ENCODE measurements at regions of chr3 and their contacts with region 1.

Region 1: GRCh38 chr3:159260049-159260662 is 458.3 kb downstream of the MFSD1 start:
- DNase-seq: peak; percentile 77
- ATAC-seq: peak; percentile 76
- H3K4me3 ChIP-seq: no peak overlapping the region
- H3K27ac ChIP-seq: no peak overlapping the region
- H3K4me1 ChIP-seq: no peaks in the 10 kb centered on the region
- H3K27me3 ChIP-seq: peaks cover 11% of the 10 kb centered on the region
- CTCF ChIP-seq: peak; percentile 86
- POLR2A ChIP-seq: no peak
- RAD21 ChIP-seq: peak; percentile 73

Region 2: DNA sequence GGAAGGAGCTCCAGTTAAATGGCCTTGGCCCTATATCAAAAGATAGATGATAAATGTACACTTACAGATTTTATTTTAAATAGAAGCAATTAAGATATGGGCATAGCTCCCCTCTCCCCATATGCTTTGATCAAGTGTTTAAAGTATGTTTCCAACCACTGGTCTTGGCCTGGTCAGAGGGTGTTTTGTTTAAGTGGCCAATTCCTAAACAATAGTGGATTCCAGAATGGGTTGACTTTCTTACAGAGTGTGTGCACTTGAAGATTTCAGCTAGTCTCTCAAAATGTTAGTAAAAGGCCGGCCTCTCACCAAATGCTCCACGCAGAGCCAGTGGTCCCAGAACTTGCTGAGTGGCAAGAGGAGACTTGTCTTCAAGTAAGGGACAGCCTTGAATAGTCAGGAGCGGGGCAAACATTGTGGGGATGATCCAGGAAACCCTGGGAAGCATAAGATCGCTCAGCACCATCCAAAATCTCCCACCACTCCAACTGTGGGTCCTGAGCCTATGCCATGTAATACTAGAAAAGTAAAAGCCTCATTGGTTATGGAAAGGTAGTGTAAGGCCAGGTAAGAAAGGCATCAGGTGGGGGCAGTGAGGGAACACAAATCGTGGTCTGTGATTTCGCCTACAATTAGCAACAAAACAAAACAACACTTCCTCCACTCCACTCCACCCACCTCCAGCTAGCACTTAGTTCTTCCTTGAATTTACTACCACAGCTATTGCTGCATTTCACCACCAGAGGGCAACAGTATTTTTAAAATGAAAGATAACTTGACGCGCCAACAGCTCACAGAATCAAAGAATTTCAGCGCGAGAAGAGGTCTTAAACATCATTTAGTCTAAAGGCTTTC is 532.7 kb before region 1 on chr3:
- CTCF ChIA-PET with region 1: no interaction called
- POLR2A ChIA-PET with region 1: no interaction called
- dilution Hi-C with region 1: no loop called
- in situ Hi-C with region 1: no loop called
- intact Hi-C with region 1: loop called (anchors 5 kb)
- DNase-seq: peak; percentile 83
- ATAC-seq: peak; percentile 12; the same call in 1 of the 2 replicates
- H3K4me3 ChIP-seq: no peak overlapping the region
- H3K27ac ChIP-seq: peak overlapping the region; percentile 84
- H3K4me1 ChIP-seq: peaks cover 42% of the 10 kb centered on the region
- H3K27me3 ChIP-seq: no peaks in the 10 kb centered on the region
- CTCF ChIP-seq: peak; percentile 86
- POLR2A ChIP-seq: no peak
- RAD21 ChIP-seq: peak; percentile 77

Region 3: GRCh38 chr3:158845765-158846350 is 414.3 kb before region 1 on chr3:
- CTCF ChIA-PET with region 1: interaction called, 7 read pairs
- POLR2A ChIA-PET with region 1: no interaction called
- dilution Hi-C with region 1: no loop called
- in situ Hi-C with region 1: loop called (anchors 5 kb)
- intact Hi-C with region 1: loop called (anchors 1 kb)
- DNase-seq: no peak
- ATAC-seq: no peak
- H3K4me3 ChIP-seq: no peak overlapping the region
- H3K27ac ChIP-seq: no peak overlapping the region
- H3K4me1 ChIP-seq: no peaks in the 10 kb centered on the region
- H3K27me3 ChIP-seq: peaks cover 10% of the 10 kb centered on the region
- CTCF ChIP-seq: peak; percentile 52
- POLR2A ChIP-seq: no peak
- RAD21 ChIP-seq: peak; percentile 56

Region 4: GRCh38 chr3:159130108-159130507 is 130.0 kb before region 1 on chr3:
- CTCF ChIA-PET with region 1: interaction called, 6 read pairs
- POLR2A ChIA-PET with region 1: no interaction called
- dilution Hi-C with region 1: no loop called
- in situ Hi-C with region 1: no loop called
- intact Hi-C with region 1: loop called (anchors 5 kb)
- DNase-seq: peak; percentile 1
- ATAC-seq: no peak
- H3K4me3 ChIP-seq: no peak overlapping the region
- H3K27ac ChIP-seq: no peak overlapping the region
- H3K4me1 ChIP-seq: no peaks in the 10 kb centered on the region
- H3K27me3 ChIP-seq: no peaks in the 10 kb centered on the region; the same call in 1 of the 2 replicates
- CTCF ChIP-seq: peak; percentile 23
- POLR2A ChIP-seq: no peak
- RAD21 ChIP-seq: no peak

Region 5: GRCh38 chr3:159301961-159302360 is 41.8 kb after region 1 on chr3:
- CTCF ChIA-PET with region 1: no interaction called
- POLR2A ChIA-PET with region 1: no interaction called
- dilution Hi-C with region 1: no loop called
- in situ Hi-C with region 1: no loop called
- intact Hi-C with region 1: no loop called
- DNase-seq: no peak
- ATAC-seq: no peak
- H3K4me3 ChIP-seq: no peak overlapping the region
- H3K27ac ChIP-seq: no peak overlapping the region
- H3K4me1 ChIP-seq: no peaks in the 10 kb centered on the region
- H3K27me3 ChIP-seq: no peaks in the 10 kb centered on the region
- CTCF ChIP-seq: no peak
- POLR2A ChIP-seq: no peak
- RAD21 ChIP-seq: no peak

Region 6: DNA sequence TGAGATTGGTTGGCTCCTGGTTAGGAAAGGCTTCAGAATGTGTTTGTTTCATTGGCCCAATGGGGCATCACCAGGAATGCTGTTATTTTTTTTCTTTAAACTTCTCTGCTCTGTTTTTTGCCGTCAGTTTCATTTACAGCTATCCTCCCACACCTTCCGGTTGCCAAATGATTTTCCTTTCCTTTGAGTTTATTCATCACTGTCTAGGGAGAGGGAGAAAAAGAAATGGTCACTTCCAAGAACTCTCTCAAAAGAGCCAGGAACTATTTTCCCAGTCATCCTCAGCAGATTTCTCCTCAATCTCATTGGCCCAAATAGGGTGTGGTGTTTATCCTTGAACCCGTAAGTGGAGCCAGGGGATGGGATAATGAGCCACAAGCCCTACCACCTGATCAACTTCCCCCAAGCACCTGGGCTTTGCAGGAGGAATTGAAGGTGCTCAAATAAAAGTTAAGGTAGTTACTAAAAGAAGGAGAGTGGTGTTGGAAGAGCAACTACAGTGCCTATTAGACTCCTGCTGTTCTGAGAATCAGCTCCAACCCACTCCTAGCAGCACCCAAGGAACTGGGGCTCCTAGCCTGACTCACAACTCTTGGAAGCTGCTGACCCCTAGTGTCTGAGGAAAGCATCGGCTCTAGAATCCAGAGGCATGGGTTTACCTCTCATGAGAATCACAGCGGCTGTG is 544.7 kb after region 1 on chr3:
- CTCF ChIA-PET with region 1: interaction called, 4 read pairs
- POLR2A ChIA-PET with region 1: no interaction called
- dilution Hi-C with region 1: no loop called
- in situ Hi-C with region 1: loop called (anchors 5 kb)
- intact Hi-C with region 1: loop called (anchors 1 kb)
- DNase-seq: peak; percentile 92
- ATAC-seq: peak; percentile 93
- H3K4me3 ChIP-seq: no peak overlapping the region
- H3K27ac ChIP-seq: no peak overlapping the region
- H3K4me1 ChIP-seq: peaks cover 22% of the 10 kb centered on the region
- H3K27me3 ChIP-seq: no peaks in the 10 kb centered on the region
- CTCF ChIP-seq: peak; percentile 95
- POLR2A ChIP-seq: no peak
- RAD21 ChIP-seq: peak; percentile 98

Region 7: GRCh38 chr3:160486459-160486869 is 1226.3 kb after region 1 on chr3:
- CTCF ChIA-PET with region 1: no interaction called
- POLR2A ChIA-PET with region 1: no interaction called
- dilution Hi-C with region 1: no loop called
- in situ Hi-C with region 1: no loop called
- intact Hi-C with region 1: loop called (anchors 5 kb)
- DNase-seq: peak; percentile 71
- ATAC-seq: no peak
- H3K4me3 ChIP-seq: no peak overlapping the region
- H3K27ac ChIP-seq: no peak overlapping the region
- H3K4me1 ChIP-seq: peaks cover 4% of the 10 kb centered on the region
- H3K27me3 ChIP-seq: no peaks in the 10 kb centered on the region
- CTCF ChIP-seq: peak; percentile 64
- POLR2A ChIP-seq: no peak
- RAD21 ChIP-seq: peak; percentile 48